ENCODE measurements at regions of chr20 and their contacts with region 1.

Region 1: DNA sequence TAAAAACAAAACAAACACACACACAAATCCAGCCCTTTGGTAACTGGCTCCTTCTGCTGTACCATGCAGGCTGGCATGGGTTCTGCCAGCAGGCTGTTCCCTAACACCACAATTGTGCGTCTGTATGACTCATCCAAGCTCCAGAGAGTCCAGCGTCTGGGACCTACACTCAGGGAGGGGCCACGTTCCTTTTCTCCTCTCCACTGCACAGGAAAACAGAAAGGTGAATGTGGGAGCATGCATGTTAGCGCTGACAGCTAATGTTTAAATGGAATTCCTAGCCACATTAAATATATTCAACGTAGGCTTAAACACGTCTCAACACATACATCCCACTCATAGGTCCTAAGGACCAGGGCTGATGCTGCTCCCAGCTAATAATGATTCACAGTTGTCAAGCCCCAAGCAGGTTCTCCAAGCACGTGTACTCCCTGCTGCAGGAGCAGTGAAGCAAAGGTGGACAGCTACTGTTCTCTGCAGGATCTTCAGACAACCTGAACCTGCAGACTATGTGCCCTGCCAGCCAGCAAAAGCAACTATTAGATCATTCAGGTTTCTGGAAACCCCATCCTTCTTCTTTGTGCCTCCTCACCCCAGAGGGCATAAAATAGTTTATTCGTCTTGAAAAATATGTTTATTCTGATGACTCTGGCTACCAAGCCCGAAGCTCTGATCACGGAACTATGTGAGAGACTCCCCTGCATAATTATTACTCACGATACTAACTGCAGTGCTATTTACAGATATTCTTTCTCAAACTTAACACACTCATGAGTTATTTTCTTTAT is 20.9 kb downstream of the MAP1LC3A start:
- DNase-seq: peak; percentile 40 to 82
- H3K4me3 ChIP-seq: no peak overlapping the region
- CTCF ChIP-seq: no peak
- POLR2A ChIP-seq: no peak

Region 2: DNA sequence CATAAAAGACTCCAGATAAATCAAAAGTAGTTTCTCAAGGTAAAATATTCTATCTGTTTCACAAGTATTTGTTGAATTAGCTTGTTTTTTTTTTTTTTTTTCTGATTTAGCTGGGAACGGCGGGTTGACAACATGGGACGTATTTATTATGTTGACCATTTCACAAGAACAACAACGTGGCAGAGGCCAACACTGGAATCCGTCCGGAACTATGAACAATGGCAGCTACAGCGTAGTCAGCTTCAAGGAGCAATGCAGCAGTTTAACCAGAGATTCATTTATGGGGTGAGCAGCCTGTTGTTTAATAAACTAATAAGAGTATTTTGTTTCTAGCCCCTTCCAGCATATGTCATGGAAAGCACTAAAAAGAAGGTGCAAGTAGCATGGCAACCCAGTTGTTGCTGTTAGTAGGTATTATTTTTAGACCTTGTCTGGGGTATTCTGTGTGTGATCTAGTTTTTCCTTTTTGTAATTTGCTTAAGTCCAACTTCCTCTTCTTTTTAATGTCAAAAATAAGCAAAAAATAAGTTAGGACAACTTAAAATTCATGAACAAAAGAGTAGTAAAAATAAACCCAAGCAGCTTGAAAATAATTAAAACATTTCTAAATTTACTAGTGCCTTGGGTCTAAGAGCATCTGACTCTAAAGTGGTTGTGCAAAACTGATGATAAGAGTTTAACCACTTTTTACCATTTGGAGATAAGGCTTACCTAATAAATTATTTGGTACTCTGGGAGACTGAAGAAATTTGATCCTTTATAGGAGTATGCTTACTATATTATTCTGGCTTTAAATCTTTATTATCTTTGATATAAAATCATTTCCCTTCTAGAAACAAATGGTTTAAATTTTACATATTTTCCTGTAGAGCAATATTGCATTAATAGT is 134.0 kb before region 1 on chr20:
- intact Hi-C with region 1: no loop called
- DNase-seq: no peak
- H3K4me3 ChIP-seq: no peak overlapping the region
- CTCF ChIP-seq: no peak
- POLR2A ChIP-seq: no peak

Region 3: GRCh38 chr20:34704177-34705007 is 125.0 kb after region 1 on chr20 and contains the start of gene TP53INP2:
- intact Hi-C with region 1: loop called (anchors 10 kb)
- DNase-seq: peak; percentile 92 to 98
- H3K4me3 ChIP-seq: peak within 1 kb of the TSS; percentile 83
- CTCF ChIP-seq: no peak
- POLR2A ChIP-seq: peak in 1 of 2 donors; percentile 62
- total RNA-seq, gene TP53INP2: 3.8 to 12.0 (median 8.5) TPM

Region 4: DNA sequence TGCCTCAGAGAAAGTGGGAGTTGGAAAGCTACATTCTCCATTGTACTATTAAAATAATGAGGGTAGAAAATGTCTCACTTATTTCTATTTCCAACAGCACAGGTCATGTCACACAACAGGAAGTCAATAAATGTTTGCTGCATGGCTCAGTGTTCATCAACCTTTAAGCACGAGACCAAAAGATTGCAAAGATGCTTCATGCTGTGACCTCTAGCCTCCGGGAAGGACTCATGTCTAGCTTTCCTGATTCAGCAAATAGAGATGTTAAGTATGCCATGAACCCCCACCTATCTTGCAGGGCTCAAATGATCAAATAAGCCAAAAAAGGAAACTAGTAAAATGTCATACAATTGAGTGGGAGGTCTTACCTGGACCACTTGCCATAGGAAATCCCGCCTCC is 188.7 kb after region 1 on chr20:
- intact Hi-C with region 1: loop called (anchors 10 kb)
- DNase-seq: no peak
- H3K4me3 ChIP-seq: no peak overlapping the region
- CTCF ChIP-seq: no peak
- POLR2A ChIP-seq: no peak

Region 5: DNA sequence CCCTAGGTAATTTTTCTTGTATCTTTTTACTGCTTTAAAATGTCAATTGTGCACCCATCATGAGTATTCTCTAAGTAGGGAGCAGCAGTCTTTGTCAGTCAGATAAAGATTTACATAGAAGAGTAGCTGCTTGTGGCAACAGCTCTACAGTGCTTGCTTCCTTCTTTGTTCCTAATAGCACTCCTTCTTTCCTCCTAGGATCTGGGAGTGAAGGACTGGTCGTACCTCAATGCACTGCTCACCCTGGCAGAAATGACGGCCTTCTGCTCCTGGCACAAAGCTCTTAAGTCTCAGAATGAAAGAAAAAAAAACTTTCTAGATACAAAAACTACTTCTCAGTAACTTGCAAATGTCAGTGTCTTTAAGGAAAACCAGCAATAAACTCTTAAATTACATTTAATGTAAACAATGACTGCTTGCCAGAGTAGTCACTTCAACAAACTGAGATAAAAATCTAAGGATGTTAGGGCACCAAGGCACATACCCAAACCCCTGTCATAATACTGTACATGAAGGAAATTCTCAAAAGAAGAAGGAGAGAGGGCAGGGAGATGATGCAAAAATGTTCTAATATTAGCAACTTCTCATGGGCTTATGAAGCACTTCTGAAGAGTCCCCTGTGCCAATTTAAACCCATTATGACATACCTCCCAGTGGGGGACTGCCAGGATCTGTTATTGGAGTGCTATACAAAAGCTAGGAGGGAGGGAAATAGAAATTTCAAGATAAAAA is 212.1 kb after region 1 on chr20:
- intact Hi-C with region 1: no loop called
- DNase-seq: no peak
- H3K4me3 ChIP-seq: no peak overlapping the region
- CTCF ChIP-seq: no peak
- POLR2A ChIP-seq: no peak